ENCODE measurements at regions of chr13 and their contacts with region 1.

Region 1: DNA sequence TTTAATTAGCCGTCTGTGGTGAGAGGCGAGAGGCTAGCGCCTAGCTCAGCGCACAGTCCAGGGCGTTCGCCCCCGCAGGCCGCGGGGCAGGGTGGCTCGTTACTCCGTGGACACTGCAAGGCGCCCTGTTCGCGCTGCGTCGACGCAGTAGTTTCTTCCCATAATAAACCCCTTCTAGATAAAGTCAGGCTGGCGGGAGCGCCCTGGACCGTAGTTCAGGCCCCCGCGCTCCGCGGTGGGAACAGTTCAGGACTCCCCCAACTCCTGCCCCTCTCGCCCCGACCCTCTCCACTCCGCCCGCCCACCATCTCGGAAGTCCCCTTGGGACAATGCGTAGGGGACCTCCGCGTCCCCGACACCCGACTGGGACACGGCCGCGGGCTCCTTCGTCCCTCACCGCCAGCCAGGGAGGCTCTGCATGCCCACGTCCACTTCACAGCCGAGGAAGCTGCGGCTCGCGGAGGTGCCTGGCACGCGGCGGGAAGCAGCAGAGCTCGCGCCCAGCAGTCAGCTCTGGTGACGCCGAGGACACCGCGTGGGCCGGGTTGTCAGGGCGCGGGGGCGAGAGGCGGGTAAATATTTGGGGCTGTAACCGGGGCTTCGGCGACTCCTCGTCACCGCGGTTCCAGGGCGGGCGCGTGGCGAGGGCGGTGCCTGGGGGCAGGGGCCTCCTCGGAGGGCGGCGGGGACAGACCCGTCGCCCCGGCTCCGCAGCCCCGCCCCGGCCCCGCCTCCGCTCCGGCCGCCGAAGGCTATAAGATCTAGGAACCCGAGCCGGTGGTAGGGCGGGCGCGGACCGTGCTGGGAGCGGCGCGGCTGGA is at the start of gene RGCC:
- DNase-seq: peak; percentile 74
- H3K4me3 ChIP-seq: peak within 1 kb of the TSS; percentile 56 to 90 (median 66)
- H3K27ac ChIP-seq: peak within 1 kb of the TSS; percentile 49
- H3K4me1 ChIP-seq: peaks cover 19% of the 10 kb centered on the region
- H3K27me3 ChIP-seq: peaks cover 11 to 12% of the 10 kb centered on the region in 2 experiments
- CTCF ChIP-seq: no peak
- POLR2A ChIP-seq: peak; percentile 87
- total RNA-seq, gene RGCC: 138 and 148 TPM in 2 replicates

Region 2: DNA sequence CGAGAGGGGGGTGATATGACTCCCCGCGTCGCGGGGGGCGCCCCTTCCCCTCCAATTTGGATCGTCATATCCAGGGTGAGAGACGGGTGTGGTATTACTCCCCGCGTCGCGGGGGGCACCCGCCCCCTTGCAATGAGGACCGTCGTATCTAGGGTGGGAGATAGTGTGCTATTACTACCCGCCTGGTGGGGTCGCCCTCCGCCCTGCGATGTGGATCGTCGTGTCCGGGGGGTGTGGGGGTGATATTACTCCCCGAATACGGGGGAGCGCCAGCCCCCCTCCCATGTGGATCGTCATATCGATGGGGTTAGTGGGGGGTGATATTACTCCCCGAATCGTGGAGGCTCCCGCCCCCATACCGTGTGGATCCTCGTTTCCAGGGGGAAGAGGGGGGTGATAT is 28.8 kb before region 1 on chr13:
- CTCF ChIA-PET with region 1: no interaction called
- POLR2A ChIA-PET with region 1: no interaction called
- dilution Hi-C with region 1: no loop called
- intact Hi-C with region 1: loop called (anchors 2 kb)
- DNase-seq: no peak
- H3K4me3 ChIP-seq: peak overlapping the region; percentile 27 to 33 (median 30)
- H3K27ac ChIP-seq: no peak overlapping the region
- H3K4me1 ChIP-seq: peaks cover 6% of the 10 kb centered on the region
- H3K27me3 ChIP-seq: peaks cover 0 to 4% of the 10 kb centered on the region in 2 experiments
- CTCF ChIP-seq: peak; percentile 38 to 48
- POLR2A ChIP-seq: no peak

Region 3: GRCh38 chr13:41492404-41493260 is 35.7 kb after region 1 on chr13:
- CTCF ChIA-PET with region 1: no interaction called
- POLR2A ChIA-PET with region 1: no interaction called
- dilution Hi-C with region 1: no loop called
- intact Hi-C with region 1: no loop called
- DNase-seq: peak; percentile 17
- H3K4me3 ChIP-seq: no peak overlapping the region
- H3K27ac ChIP-seq: no peak overlapping the region
- H3K4me1 ChIP-seq: peaks cover 4% of the 10 kb centered on the region
- H3K27me3 ChIP-seq: peaks cover 4 to 5% of the 10 kb centered on the region in 2 experiments
- CTCF ChIP-seq: no peak
- POLR2A ChIP-seq: no peak